Activated CD8-positive, alpha-beta T cell treated with anti-CD3 and anti-CD28 coated beads, Interleukin-2, amount 10 ng/mL, durations not matched to agents 7 days and 5 days (primary cell): ENCODE measurements at regions of chrX and their contacts with region 1.

Region 1: GRCh38 chrX:109732780-109733657 is at the start of gene ACSL4:
- DNase-seq: peak; percentile 88
- ATAC-seq: peak; percentile 95
- H3K4me3 Mint-ChIP-seq: peak within 1 kb of the TSS; percentile 90
- H3K27ac Mint-ChIP-seq: peak within 1 kb of the TSS; percentile 95
- H3K4me1 Mint-ChIP-seq: peaks cover 30% of the 10 kb centered on the region
- H3K27me3 Mint-ChIP-seq: no peaks in the 10 kb centered on the region
- total RNA-seq, gene ACSL4: 44.8 to 50.7 TPM

Region 2: DNA sequence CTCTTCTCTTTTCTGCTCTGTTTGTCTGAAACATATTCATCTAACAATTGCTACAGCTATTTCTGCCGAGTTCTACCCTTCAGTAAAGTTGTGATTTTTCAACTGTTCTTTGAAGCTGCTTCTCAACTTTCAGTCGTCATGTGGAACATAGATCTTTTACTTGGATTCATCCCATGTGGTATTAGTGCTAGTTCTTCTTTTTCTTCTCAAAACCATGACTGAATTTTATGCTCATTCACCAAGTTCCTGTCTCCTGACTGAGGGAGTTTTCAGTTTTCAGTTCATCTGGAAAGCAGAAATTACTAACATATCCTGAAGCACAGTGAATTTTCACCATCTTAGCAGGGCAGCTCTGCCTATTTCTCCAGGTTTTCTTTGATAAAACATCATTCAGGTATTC is 12.1 kb before region 1 on chrX:
- CTCF ChIA-PET with region 1: interaction called, 4 read pairs
- POLR2A ChIA-PET with region 1: interaction called, 11 read pairs
- DNase-seq: no peak
- ATAC-seq: no peak
- H3K4me3 Mint-ChIP-seq: no peak overlapping the region
- H3K27ac Mint-ChIP-seq: no peak overlapping the region
- H3K4me1 Mint-ChIP-seq: peaks cover 18% of the 10 kb centered on the region
- H3K27me3 Mint-ChIP-seq: no peaks in the 10 kb centered on the region

Region 3: GRCh38 chrX:109863811-109864210 is 130.8 kb after region 1 on chrX:
- CTCF ChIA-PET with region 1: no interaction called
- POLR2A ChIA-PET with region 1: no interaction called
- DNase-seq: no peak
- ATAC-seq: no peak
- H3K4me3 Mint-ChIP-seq: no peak overlapping the region
- H3K27ac Mint-ChIP-seq: no peak overlapping the region
- H3K4me1 Mint-ChIP-seq: no peaks in the 10 kb centered on the region
- H3K27me3 Mint-ChIP-seq: no peaks in the 10 kb centered on the region

Region 4: GRCh38 chrX:109880629-109881028 is 147.6 kb after region 1 on chrX:
- CTCF ChIA-PET with region 1: no interaction called
- POLR2A ChIA-PET with region 1: no interaction called
- DNase-seq: no peak
- ATAC-seq: no peak
- H3K4me3 Mint-ChIP-seq: no peak overlapping the region
- H3K27ac Mint-ChIP-seq: no peak overlapping the region
- H3K4me1 Mint-ChIP-seq: no peaks in the 10 kb centered on the region
- H3K27me3 Mint-ChIP-seq: peaks cover 8% of the 10 kb centered on the region

Region 5: DNA sequence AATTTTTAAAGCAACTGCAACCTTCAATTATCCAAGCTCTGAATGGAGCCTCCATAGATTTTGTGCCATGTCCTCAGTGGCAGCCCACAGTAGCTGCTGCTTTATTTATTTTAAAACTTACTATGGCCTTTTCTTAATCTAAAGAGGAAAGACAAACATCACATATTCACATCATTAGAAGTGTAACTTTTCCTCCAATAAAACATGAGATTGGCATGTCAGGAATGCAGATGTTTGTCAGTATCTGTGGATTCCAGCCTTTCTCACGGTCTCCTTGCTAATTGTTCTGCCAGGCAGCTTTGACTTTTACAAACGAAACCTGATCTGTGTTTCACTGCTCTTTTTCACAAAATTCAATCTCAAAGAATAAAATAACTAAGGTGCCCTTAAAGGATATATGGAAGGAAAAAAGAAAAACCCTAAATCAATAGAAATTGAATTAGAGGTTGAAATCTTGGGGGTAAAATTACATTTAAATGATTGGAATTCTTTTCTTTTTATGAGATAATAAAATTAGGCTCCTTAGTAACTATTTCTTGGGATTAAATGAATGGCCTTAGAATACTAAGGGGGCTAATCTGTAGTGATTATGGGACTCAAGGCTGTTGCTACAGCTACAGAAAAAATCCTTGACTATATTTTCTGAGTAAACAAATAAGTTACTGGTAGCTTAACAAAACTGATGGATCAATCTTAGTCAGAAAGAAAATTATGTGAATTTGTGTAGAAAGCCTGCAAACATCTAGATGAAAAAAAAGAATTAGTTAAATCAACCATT is 776.9 kb after region 1 on chrX:
- CTCF ChIA-PET with region 1: no interaction called
- POLR2A ChIA-PET with region 1: no interaction called
- DNase-seq: no peak
- ATAC-seq: no peak
- H3K4me3 Mint-ChIP-seq: no peak overlapping the region
- H3K27ac Mint-ChIP-seq: no peak overlapping the region
- H3K4me1 Mint-ChIP-seq: no peaks in the 10 kb centered on the region
- H3K27me3 Mint-ChIP-seq: no peaks in the 10 kb centered on the region